ENCODE measurements at regions of chr15 and their contacts with region 1.

Region 1: DNA sequence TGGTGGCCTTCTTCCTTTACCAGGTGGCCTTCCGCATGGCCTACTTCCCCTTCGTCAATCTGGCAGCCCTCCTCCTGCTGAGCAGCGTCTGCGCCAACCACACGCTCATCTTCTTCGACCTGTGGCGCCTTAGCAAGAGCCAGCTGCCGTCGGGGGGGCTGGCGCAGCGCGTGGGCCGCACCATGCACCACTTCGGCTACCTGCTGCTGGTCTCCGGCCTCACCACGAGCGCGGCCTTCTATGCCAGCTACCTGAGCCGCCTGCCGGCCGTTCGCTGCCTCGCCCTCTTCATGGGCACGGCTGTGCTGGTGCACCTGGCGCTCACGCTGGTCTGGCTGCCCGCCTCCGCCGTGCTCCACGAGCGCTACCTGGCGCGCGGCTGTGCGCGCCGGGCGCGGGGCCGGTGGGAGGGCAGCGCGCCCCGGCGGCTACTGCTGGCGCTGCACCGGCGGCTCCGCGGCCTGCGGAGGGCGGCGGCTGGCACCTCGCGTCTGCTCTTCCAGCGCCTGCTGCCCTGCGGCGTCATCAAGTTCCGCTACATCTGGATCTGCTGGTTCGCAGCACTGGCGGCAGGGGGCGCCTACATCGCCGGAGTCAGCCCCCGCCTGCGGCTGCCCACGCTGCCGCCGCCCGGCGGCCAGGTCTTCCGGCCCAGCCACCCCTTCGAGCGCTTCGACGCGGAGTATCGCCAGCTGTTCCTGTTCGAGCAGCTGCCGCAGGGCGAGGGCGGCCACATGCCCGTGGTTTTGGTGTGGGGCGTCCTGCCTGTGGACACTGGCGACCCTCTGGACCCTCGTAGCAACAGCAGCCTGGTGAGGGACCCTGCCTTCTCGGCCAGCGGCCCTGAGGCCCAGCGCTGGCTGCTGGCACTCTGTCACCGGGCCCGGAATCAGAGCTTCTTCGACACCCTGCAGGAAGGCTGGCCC is 9.9 kb downstream of the DISP2 start:
- DNase-seq: peak; percentile 98
- H3K4me3 ChIP-seq: peak overlapping the region; percentile 4 to 76 (median 49)
- H3K27ac ChIP-seq: peak overlapping the region in 7 of 8 donors; percentile 58 to 87 (median 75)
- H3K4me1 ChIP-seq: peaks cover 12 to 44% (median 27%) of the 10 kb centered on the region in 6 donors
- H3K27me3 ChIP-seq: no peaks in the 10 kb centered on the region
- CTCF ChIP-seq: peak; percentile 75 to 98 (median 94)
- POLR2A ChIP-seq: no peak

Region 2: DNA sequence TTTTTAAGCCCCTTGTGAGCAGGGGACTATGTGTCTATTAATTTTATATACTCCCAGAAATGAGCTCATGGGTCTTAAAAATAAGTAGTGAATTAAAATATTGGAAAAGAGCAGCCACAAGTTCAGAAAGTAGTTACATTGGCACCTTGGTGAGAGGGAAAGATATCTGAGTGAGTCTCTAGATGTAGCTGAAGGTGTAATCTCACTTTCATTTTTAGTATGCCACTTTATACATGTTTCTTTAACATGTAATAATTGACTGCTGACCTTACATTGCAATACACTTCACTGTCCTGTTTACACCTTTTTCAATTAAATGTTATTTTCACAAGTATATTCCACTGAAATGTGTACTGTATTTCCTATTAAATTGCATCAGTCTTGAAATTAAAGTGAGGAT is 141.2 kb before region 1 on chr15:
- intact Hi-C with region 1: no loop called
- DNase-seq: no peak
- H3K4me3 ChIP-seq: no peak overlapping the region
- H3K27ac ChIP-seq: no peak overlapping the region
- H3K4me1 ChIP-seq: no peaks in the 10 kb centered on the region
- H3K27me3 ChIP-seq: no peaks in the 10 kb centered on the region
- CTCF ChIP-seq: no peak
- POLR2A ChIP-seq: no peak

Region 3: GRCh38 chr15:40307421-40308211 is 60.3 kb before region 1 on chr15 and contains the start of gene PLCB2:
- intact Hi-C with region 1: no loop called
- DNase-seq: peak; percentile 94
- H3K4me3 ChIP-seq: peak within 1 kb of the TSS; percentile 37 to 81 (median 54)
- H3K27ac ChIP-seq: peak within 1 kb of the TSS; percentile 86 to 98 (median 93)
- H3K4me1 ChIP-seq: peaks cover 8 to 79% (median 44%) of the 10 kb centered on the region in 6 donors
- H3K27me3 ChIP-seq: no peaks in the 10 kb centered on the region
- CTCF ChIP-seq: peak in 10 of 11 experiments; percentile 22 to 67 (median 38)
- POLR2A ChIP-seq: peak in 2 of 3 donors; percentile 51 to 60
- total RNA-seq, gene PLCB2: 175 to 247 (median 189) TPM

Region 4: GRCh38 chr15:40412095-40412759 is 44.3 kb after region 1 on chr15:
- intact Hi-C with region 1: loop called (anchors 10 kb)
- DNase-seq: peak; percentile 36
- H3K4me3 ChIP-seq: no peak overlapping the region
- H3K27ac ChIP-seq: no peak overlapping the region
- H3K4me1 ChIP-seq: peaks cover 2 to 21% (median 7%) of the 10 kb centered on the region in 6 donors
- H3K27me3 ChIP-seq: no peaks in the 10 kb centered on the region
- CTCF ChIP-seq: no peak
- POLR2A ChIP-seq: no peak